Endothelial cell of umbilical vein (primary cell): ENCODE measurements at regions of chr21 and their contacts with region 1.

Region 1: DNA sequence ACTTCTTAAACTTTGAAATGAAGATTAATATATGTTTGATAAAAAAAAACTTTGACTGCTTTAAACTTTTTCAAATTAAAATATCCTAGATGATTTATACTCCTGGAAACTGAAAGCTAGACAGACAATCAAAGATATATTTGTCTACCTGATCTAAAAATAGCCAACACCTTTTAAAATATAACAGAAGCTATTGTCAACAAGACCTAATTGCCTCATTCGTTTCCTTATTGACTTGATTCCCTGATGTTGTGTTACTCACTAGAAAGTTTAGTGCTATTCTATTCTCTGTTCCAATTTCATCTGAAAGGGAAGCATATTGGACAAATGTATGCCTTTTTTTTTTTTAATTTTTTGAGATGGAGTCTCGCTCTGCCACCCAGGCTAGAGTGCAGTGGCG is 445.6 kb upstream of the ADAMTS5 start:
- DNase-seq: no peak
- H3K4me3 ChIP-seq: no peak overlapping the region
- H3K27ac ChIP-seq: no peak overlapping the region
- H3K4me1 ChIP-seq: no peaks in the 10 kb centered on the region
- H3K27me3 ChIP-seq: no peaks in the 10 kb centered on the region
- CTCF ChIP-seq: no peak
- POLR2A ChIP-seq: no peak

Region 2: GRCh38 chr21:26965040-26965906 is 447.3 kb before region 1 on chr21:
- CTCF ChIA-PET with region 1: no interaction called
- POLR2A ChIA-PET with region 1: no interaction called
- dilution Hi-C with region 1: no loop called
- intact Hi-C with region 1: no loop called
- DNase-seq: no peak
- H3K4me3 ChIP-seq: no peak overlapping the region
- H3K27ac ChIP-seq: no peak overlapping the region
- H3K4me1 ChIP-seq: peaks cover 14% of the 10 kb centered on the region
- H3K27me3 ChIP-seq: peaks cover 23 to 44% of the 10 kb centered on the region in 2 experiments
- CTCF ChIP-seq: peak in 1 of 2 donors; percentile 32
- POLR2A ChIP-seq: no peak

Region 3: GRCh38 chr21:27466140-27466539 is 53.6 kb after region 1 on chr21:
- CTCF ChIA-PET with region 1: no interaction called
- POLR2A ChIA-PET with region 1: no interaction called
- dilution Hi-C with region 1: no loop called
- intact Hi-C with region 1: no loop called
- DNase-seq: no peak
- H3K4me3 ChIP-seq: no peak overlapping the region
- H3K27ac ChIP-seq: no peak overlapping the region
- H3K4me1 ChIP-seq: no peaks in the 10 kb centered on the region
- H3K27me3 ChIP-seq: no peaks in the 10 kb centered on the region
- CTCF ChIP-seq: no peak
- POLR2A ChIP-seq: no peak

Region 4: DNA sequence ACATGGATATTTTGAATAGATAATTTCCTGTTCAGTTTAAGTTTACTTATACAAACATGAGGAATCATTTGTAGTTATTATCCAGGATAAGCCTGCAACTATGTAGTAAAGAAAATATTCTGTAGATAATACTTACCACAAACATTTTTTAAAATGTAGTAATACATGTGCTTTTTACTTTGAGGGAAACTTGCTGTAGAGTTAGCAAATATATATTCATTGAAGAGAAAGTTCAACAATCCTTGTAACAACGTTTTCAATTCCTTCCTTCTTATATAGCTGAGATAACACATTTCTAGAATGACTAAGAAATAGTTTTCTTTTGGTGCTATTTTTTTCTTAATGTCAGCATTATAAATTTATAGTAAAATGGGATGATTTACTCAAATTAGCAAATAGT is 218.9 kb after region 1 on chr21:
- CTCF ChIA-PET with region 1: no interaction called
- POLR2A ChIA-PET with region 1: no interaction called
- dilution Hi-C with region 1: no loop called
- intact Hi-C with region 1: no loop called
- DNase-seq: no peak
- H3K4me3 ChIP-seq: no peak overlapping the region
- H3K27ac ChIP-seq: no peak overlapping the region
- H3K4me1 ChIP-seq: no peaks in the 10 kb centered on the region
- H3K27me3 ChIP-seq: no peaks in the 10 kb centered on the region
- CTCF ChIP-seq: no peak
- POLR2A ChIP-seq: no peak

Region 5: GRCh38 chr21:28160378-28160777 is 747.8 kb after region 1 on chr21:
- CTCF ChIA-PET with region 1: no interaction called
- POLR2A ChIA-PET with region 1: no interaction called
- dilution Hi-C with region 1: no loop called
- intact Hi-C with region 1: loop called (anchors 5 kb)
- DNase-seq: no peak
- H3K4me3 ChIP-seq: no peak overlapping the region
- H3K27ac ChIP-seq: no peak overlapping the region
- H3K4me1 ChIP-seq: no peaks in the 10 kb centered on the region
- H3K27me3 ChIP-seq: no peaks in the 10 kb centered on the region
- CTCF ChIP-seq: no peak
- POLR2A ChIP-seq: no peak